Calu3 (cell line): ENCODE measurements at regions of chr7 and their contacts with region 1.

Region 1: DNA sequence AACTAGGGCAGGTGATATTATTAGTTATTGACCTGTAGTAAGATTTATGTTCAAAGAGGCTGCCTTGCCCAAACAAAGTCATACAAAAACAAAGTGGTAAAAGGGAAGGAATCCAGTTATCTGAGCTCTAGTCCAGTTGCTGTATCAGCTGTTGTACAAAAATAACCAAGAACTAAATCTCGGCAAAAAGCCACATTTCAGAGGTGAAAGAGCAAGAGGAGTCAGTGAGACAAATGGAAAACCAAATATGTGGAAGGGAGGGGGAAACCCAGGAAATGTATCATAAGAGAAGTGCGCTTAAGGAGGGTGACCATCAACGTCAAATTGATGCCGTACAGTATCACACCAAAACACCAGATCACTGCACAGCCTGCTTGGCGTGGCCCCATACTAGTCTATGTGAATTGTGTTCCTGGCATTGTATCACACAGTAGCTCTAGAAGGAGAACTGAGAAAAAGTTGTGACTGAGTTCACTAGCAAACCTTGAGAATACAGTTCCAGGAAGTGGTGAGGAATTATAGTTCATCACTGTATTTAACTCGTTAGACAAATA is 6.4 kb downstream of the AGBL3 start:
- DNase-seq: no peak
- H3K4me3 Mint-ChIP-seq: peak overlapping the region; percentile 9
- H3K27ac Mint-ChIP-seq: peak overlapping the region; percentile 60
- H3K4me1 Mint-ChIP-seq: peaks cover 44% of the 10 kb centered on the region
- H3K27me3 Mint-ChIP-seq: no peaks in the 10 kb centered on the region
- CTCF ChIP-seq: no peak

Region 2: GRCh38 chr7:135147899-135148721 is 155.4 kb after region 1 on chr7 and contains the start of gene TMEM140:
- CTCF ChIA-PET with region 1: no interaction called
- intact Hi-C with region 1: loop called (anchors 5 kb)
- DNase-seq: no peak
- H3K4me3 Mint-ChIP-seq: peak within 1 kb of the TSS; percentile 71
- H3K27ac Mint-ChIP-seq: peak within 1 kb of the TSS; percentile 82
- H3K4me1 Mint-ChIP-seq: peaks cover 35% of the 10 kb centered on the region
- H3K27me3 Mint-ChIP-seq: no peaks in the 10 kb centered on the region
- CTCF ChIP-seq: no peak
- total RNA-seq, gene TMEM140: 4.2 and 11.4 TPM in 2 replicates